KBM-7 (cell line): ENCODE measurements at regions of chr2 and their contacts with region 1.

Region 1: DNA sequence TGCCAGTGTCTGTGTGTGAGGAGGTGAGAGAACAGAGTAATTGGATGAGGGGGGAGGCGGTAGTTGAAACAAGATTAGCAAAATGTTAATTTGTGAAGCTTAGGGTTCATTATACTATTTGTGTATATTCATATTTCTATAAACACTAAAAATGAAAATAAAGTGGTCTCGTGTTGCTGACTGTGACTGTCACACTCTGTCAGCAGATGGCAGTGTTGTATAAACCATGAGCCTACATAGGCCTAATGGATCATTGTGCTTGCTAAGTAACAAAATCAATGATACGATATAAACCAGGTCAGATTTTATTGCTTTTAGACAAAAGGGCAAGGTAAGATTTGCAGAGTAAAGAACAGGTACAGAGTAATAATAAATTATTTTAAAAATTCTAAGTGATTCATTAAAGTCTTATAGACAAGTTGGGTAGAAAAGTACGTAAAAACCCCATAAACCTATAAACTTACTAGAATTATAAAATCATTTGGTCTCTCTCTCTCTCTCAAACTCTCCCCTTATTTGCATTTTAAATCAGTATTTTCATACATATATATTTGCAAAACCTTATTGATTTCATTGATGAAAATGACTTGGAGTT is 182.7 kb downstream of the RPIA start:
- DNase-seq: peak; percentile 72

Region 2: DNA sequence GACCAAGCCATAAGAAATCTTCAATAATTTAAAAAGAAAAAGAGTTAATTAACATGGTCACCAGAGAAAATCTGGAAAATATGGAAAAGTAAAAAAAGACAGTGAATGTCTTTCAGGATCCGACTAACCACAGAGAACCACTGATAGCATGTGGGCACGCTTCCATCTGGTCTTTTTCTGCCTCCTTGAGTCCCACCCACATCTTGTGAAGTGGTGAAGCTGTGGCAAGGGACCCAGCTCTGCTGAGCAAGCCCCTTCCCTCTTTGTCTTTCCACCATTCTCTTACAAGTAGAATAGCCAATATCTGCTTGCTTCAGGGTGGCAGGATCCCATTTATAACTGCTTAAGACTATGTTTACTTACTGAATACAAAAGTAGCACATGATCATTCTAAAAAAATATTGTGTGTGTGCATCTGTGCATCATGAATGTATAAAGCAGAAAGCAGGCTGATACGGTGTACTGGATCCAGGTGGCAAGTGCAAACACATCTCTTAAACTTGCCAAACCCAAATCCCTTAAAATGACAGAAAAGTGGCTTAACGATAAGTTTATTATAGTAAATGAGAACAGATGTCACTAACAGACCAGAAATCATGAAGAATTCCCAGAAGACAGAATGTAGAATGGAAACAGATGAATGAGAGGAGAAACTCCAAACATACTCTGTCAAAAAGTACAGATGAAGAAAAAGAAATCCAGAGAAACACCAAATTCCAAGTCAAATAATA is 474.0 kb before region 1 on chr2:
- in situ Hi-C with region 1: no loop called
- DNase-seq: no peak

Region 3: DNA sequence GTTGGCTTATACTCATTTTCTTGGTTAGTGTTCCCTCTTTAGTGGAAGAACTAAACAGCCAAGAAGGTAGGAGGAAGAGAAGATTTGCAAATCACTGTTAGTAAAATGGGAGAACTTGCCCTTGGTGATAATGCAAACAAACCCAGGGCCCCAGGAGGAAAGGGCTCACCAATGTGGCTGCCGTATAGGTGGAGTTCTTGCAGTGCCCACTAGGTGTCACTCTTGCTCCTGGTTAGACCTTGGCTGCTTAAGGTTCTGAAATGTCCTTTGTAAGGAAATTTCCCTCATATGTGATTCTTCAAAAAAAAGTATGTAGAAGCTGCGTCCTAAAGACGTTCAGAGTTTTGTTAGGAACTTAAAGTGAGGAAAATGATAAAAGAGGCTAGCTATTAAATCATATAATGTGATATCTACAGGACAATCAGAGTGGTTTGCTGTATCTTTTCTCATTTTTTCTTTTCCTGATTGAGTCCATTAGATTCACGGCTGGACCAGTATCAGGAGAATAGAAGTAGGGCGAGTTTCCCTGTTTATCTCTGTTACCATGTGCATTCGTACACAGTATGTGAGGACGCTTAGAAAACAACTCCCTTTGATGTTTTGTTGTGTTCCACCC is 134.1 kb before region 1 on chr2:
- in situ Hi-C with region 1: loop called (anchors 25 kb)
- DNase-seq: peak; percentile 81